HCT116 (cell line): ENCODE measurements at regions of chr7 and their contacts with region 1.

Region 1: GRCh38 chr7:36291387-36292316 is 98.0 kb upstream of the ANLN start:
- DNase-seq: peak; percentile 59
- ATAC-seq: peak; percentile 81
- H3K4me3 ChIP-seq: peak overlapping the region; percentile 29 to 42
- H3K27ac ChIP-seq: peak overlapping the region; percentile 7; the same call in 1 of the 2 replicates
- H3K4me1 ChIP-seq: peaks cover 38 to 48% of the 10 kb centered on the region in 2 experiments
- H3K27me3 ChIP-seq: no peaks in the 10 kb centered on the region
- CTCF ChIP-seq: peak; percentile 96
- POLR2A ChIP-seq: no peak
- RAD21 ChIP-seq: peak; percentile 100

Region 2: GRCh38 chr7:35716038-35716803 is 575.4 kb before region 1 on chr7:
- CTCF ChIA-PET with region 1: no interaction called
- POLR2A ChIA-PET with region 1: no interaction called
- RAD21 ChIA-PET with region 1: no interaction called
- intact Hi-C with region 1: no loop called
- DNase-seq: no peak
- ATAC-seq: no peak
- H3K4me3 ChIP-seq: no peak overlapping the region
- H3K27ac ChIP-seq: no peak overlapping the region
- H3K4me1 ChIP-seq: no peaks in the 10 kb centered on the region
- H3K27me3 ChIP-seq: no peaks in the 10 kb centered on the region
- CTCF ChIP-seq: no peak
- POLR2A ChIP-seq: no peak
- RAD21 ChIP-seq: no peak

Region 3: DNA sequence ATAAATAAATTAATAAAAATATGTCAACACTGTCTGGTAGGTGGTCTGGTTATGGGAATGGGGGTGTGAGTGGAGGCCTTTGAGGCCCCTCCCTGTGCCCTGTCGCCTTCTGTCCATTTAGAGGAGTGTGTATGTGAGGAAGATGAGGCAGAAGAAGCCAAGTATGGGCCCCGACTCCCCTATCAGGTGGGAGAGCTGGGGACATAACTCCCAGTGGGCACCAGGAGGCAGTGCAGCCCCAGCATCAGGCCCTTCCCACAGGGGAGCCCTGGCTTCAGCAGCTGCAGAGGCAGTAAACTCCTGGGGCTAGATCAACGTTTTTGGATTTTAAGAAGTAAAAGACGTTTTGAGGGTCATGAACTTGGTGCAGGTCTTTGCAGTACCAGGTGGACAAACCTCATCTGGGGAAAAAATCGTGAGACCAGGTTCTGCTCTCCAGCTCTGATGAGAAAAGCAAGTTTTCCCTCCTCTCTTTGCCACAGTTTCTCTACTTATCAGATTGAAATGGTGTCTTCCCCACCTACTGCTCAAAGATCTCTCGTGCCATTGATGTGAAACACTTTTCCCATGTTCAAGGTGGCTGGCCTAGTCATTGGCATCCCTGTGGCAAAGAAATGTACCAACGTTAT is 306.4 kb before region 1 on chr7:
- CTCF ChIA-PET with region 1: interaction called, 74 read pairs
- POLR2A ChIA-PET with region 1: interaction called, 3 read pairs
- RAD21 ChIA-PET with region 1: interaction called, 13 to 14 read pairs
- intact Hi-C with region 1: loop called (anchors 1 kb)
- DNase-seq: peak; percentile 47
- ATAC-seq: peak; percentile 100
- H3K4me3 ChIP-seq: no peak overlapping the region
- H3K27ac ChIP-seq: no peak overlapping the region
- H3K4me1 ChIP-seq: no peaks in the 10 kb centered on the region
- H3K27me3 ChIP-seq: no peaks in the 10 kb centered on the region
- CTCF ChIP-seq: peak; percentile 92 to 96 (median 93)
- POLR2A ChIP-seq: no peak
- RAD21 ChIP-seq: peak; percentile 99

Region 4: GRCh38 chr7:36021367-36021766 is 270.3 kb before region 1 on chr7:
- CTCF ChIA-PET with region 1: interaction called, 3 read pairs
- POLR2A ChIA-PET with region 1: no interaction called
- RAD21 ChIA-PET with region 1: no interaction called
- intact Hi-C with region 1: loop called (anchors 1 kb)
- DNase-seq: peak; percentile 10
- ATAC-seq: peak; percentile 72
- H3K4me3 ChIP-seq: no peak overlapping the region
- H3K27ac ChIP-seq: no peak overlapping the region
- H3K4me1 ChIP-seq: no peaks in the 10 kb centered on the region
- H3K27me3 ChIP-seq: no peaks in the 10 kb centered on the region
- CTCF ChIP-seq: peak; percentile 53 to 75 (median 69); a peak in 5 of 6 replicates
- POLR2A ChIP-seq: no peak
- RAD21 ChIP-seq: peak; percentile 79

Region 5: DNA sequence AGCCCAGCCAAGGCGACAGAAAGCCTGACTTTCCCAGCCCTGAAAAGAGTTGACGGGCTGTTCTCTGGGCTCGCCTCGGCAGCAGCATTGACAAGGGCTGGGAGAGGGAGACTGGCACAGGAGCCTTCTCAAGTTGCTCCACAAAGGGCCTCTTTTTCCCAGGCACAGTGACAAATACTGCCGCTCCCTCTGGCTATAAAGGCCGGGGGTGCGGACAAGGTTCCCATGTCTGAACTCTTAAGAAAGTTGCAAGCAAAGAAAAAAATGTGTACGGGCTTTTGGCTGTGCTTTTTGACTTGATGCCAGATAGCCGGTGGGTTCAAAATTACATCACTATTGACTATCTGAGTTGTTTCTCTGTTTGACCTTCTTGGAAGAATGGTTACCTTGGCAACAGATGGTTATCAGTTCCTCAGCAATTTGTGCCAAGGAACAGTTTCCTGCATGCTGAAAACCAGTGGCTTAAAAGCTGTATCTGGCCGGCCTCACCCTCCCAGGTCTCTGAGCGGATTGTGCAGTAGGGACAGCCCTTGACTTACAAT is 254.5 kb before region 1 on chr7:
- CTCF ChIA-PET with region 1: no interaction called
- POLR2A ChIA-PET with region 1: no interaction called
- RAD21 ChIA-PET with region 1: no interaction called
- intact Hi-C with region 1: no loop called
- DNase-seq: no peak
- ATAC-seq: no peak
- H3K4me3 ChIP-seq: no peak overlapping the region
- H3K27ac ChIP-seq: no peak overlapping the region
- H3K4me1 ChIP-seq: no peaks in the 10 kb centered on the region
- H3K27me3 ChIP-seq: no peaks in the 10 kb centered on the region
- CTCF ChIP-seq: no peak
- POLR2A ChIP-seq: no peak
- RAD21 ChIP-seq: no peak

Region 6: DNA sequence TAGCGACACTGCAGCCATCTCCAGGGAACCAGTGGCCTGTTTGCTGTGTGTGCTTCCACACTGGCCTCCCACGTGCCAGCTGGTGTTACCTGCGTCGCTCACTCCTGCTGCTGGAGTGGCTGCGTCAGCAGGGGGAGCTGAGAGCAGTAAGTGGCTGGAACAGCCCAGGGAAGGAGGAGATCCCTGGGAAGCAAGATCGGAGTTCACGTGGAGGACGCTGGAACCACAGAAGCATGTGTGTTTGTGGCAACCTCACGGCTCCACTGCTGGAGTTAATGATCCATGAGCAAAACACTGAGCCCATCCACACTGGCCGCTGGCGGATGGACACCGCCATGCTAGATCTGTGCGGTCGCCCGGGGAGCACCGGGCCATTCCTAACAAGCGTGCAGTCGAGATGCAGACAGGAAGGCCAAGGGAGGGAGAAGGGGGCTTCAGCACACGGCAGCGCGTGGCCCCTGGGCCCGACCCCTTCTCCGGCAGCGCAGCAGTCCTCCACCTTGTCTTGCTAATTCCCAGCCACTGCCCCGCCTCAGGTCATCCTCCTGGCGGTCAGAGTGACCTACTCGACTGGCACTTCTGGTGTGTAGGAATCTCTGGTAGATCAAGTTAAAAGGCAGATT is 207.1 kb before region 1 on chr7:
- CTCF ChIA-PET with region 1: interaction called, 3 read pairs
- POLR2A ChIA-PET with region 1: no interaction called
- RAD21 ChIA-PET with region 1: interaction called in 1 of 2 experiments, 4 read pairs
- intact Hi-C with region 1: loop called (anchors 1 kb)
- DNase-seq: peak; percentile 52
- ATAC-seq: peak; percentile 98
- H3K4me3 ChIP-seq: no peak overlapping the region
- H3K27ac ChIP-seq: no peak overlapping the region
- H3K4me1 ChIP-seq: peaks cover 0 to 10% of the 10 kb centered on the region in 2 experiments; a peak in 2 of 4 replicates
- H3K27me3 ChIP-seq: no peaks in the 10 kb centered on the region
- CTCF ChIP-seq: peak; percentile 42 to 55 (median 53); a peak in 5 of 6 replicates
- POLR2A ChIP-seq: no peak
- RAD21 ChIP-seq: peak; percentile 74

Region 7: GRCh38 chr7:36128448-36129047 is 163.1 kb before region 1 on chr7:
- CTCF ChIA-PET with region 1: interaction called, 16 read pairs
- POLR2A ChIA-PET with region 1: no interaction called
- RAD21 ChIA-PET with region 1: no interaction called
- intact Hi-C with region 1: loop called (anchors 2 kb)
- DNase-seq: peak; percentile 60
- ATAC-seq: peak; percentile 94
- H3K4me3 ChIP-seq: peak overlapping the region; percentile 28 to 55
- H3K27ac ChIP-seq: peak overlapping the region; percentile 26
- H3K4me1 ChIP-seq: peaks cover 9 to 26% of the 10 kb centered on the region in 2 experiments; a peak in 3 of 4 replicates
- H3K27me3 ChIP-seq: no peaks in the 10 kb centered on the region
- CTCF ChIP-seq: peak; percentile 58 to 85 (median 66); a peak in 5 of 6 replicates
- POLR2A ChIP-seq: no peak
- RAD21 ChIP-seq: peak; percentile 46; the same call in 1 of the 2 replicates

Region 8: DNA sequence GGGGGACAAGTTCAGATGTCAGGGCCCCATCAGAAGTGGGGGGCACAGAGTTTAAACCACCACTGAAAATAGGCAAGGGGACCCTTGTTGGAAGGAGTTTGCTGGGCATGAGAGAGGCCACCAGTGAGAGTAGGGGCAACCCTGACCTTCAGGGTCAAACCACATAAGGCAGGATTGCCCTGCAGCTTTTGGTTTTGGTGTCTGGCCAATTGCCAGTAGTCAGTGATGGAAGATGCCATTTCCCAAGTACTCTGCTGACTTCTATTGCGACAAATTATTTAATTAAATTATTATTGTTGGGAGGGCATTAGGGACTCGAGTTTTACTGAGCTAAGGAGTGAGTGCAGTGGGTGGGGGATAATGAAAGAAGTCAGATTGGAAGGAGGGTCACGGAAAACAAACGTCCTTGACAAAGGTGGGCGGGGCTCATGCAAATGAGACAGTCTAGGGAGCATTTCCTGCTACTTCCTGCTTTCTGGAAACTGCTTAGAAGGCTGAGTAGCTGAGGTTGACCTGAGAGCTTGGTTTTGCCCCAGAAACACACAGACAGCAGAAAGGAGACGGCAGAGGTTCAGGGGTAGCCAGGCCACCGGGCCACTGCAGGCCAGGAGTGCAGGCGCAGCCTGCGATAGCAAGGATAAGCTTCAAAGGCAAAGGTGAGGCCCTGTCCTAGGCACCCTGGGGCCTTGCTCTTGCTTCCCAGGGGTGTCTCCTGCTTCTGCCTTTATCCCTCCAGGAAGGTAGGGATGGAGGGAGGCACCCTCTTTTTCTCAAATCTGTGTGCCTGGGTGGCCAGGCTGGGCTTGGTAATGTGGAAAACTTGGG is 23.9 kb after region 1 on chr7:
- CTCF ChIA-PET with region 1: interaction called, 18 read pairs
- POLR2A ChIA-PET with region 1: no interaction called
- RAD21 ChIA-PET with region 1: interaction called in 1 of 2 experiments, 5 read pairs
- intact Hi-C with region 1: loop called (anchors 2 kb)
- DNase-seq: no peak
- ATAC-seq: no peak; the same call in 1 of the 2 replicates
- H3K4me3 ChIP-seq: no peak overlapping the region
- H3K27ac ChIP-seq: no peak overlapping the region
- H3K4me1 ChIP-seq: peaks cover 2 to 8% of the 10 kb centered on the region in 2 experiments; a peak in 1 of 4 replicates
- H3K27me3 ChIP-seq: no peaks in the 10 kb centered on the region
- CTCF ChIP-seq: no peak
- POLR2A ChIP-seq: no peak
- RAD21 ChIP-seq: no peak